ENCODE measurements at regions of chr11 and their contacts with region 1.

Region 1: DNA sequence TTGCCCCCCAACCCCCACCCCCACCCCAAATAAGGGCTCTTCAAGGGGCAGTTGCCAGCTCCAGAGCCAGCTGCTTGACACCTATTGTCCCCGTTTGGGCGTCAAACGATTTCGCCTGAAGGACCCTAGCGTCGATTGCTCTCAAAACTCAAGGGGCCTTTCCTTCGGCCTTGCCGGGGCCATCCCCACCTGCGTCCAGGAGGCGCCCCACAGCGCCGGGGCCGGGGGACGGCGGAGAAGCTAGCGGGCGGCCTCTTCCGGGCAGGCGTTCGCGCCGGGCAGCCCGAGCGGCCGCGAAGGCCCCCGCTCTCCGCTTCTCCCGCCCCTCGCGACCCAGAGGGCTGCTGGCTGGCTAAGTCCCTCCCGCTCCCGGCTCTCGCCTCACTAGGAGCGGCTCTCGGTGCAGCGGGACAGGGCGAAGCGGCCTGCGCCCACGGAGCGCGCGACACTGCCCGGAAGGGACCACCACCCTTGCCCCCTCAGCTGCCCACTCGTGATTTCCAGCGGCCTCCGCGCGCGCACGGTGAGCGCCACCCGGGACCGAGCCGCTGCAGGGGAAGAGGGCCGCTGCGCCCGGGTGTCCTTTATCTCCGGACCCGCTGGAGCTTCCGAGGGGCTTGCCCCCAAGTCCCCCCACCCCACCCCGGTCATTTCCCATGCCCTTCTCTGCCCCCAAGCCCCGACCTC is at the start of gene CAPRIN1:
- DNase-seq: peak; percentile 70 to 77 (median 74)
- H3K4me3 ChIP-seq: peak within 1 kb of the TSS; percentile 71 to 100 (median 79)
- H3K4me3 Mint-ChIP-seq: peak within 1 kb of the TSS; percentile 98 to 99
- H3K27ac ChIP-seq: peak within 1 kb of the TSS; percentile 91 to 99
- H3K27ac Mint-ChIP-seq: peak within 1 kb of the TSS; percentile 90 to 97 (median 95)
- H3K4me1 ChIP-seq: peaks cover 16 to 39% of the 10 kb centered on the region in 2 donors
- H3K4me1 Mint-ChIP-seq: peaks cover 35% of the 10 kb centered on the region
- H3K27me3 ChIP-seq: no peaks in the 10 kb centered on the region
- H3K27me3 Mint-ChIP-seq: peaks cover 0 to 1% (median 0%) of the 10 kb centered on the region in 3 donors
- CTCF ChIP-seq: no peak
- polyA plus RNA-seq, gene CAPRIN1: 50.4 to 81.5 (median 59.2) TPM

Region 2: GRCh38 chr11:33620423-33621171 is 430.9 kb before region 1 on chr11:
- intact Hi-C with region 1: no loop called
- DNase-seq: no peak
- H3K4me3 ChIP-seq: no peak overlapping the region
- H3K4me3 Mint-ChIP-seq: no peak overlapping the region
- H3K27ac ChIP-seq: no peak overlapping the region
- H3K27ac Mint-ChIP-seq: no peak overlapping the region
- H3K4me1 ChIP-seq: no peaks in the 10 kb centered on the region
- H3K4me1 Mint-ChIP-seq: no peaks in the 10 kb centered on the region
- H3K27me3 ChIP-seq: peaks cover 0 to 3% of the 10 kb centered on the region in 2 donors
- H3K27me3 Mint-ChIP-seq: peaks cover 1 to 4% (median 3%) of the 10 kb centered on the region in 3 donors
- CTCF ChIP-seq: no peak

Region 3: DNA sequence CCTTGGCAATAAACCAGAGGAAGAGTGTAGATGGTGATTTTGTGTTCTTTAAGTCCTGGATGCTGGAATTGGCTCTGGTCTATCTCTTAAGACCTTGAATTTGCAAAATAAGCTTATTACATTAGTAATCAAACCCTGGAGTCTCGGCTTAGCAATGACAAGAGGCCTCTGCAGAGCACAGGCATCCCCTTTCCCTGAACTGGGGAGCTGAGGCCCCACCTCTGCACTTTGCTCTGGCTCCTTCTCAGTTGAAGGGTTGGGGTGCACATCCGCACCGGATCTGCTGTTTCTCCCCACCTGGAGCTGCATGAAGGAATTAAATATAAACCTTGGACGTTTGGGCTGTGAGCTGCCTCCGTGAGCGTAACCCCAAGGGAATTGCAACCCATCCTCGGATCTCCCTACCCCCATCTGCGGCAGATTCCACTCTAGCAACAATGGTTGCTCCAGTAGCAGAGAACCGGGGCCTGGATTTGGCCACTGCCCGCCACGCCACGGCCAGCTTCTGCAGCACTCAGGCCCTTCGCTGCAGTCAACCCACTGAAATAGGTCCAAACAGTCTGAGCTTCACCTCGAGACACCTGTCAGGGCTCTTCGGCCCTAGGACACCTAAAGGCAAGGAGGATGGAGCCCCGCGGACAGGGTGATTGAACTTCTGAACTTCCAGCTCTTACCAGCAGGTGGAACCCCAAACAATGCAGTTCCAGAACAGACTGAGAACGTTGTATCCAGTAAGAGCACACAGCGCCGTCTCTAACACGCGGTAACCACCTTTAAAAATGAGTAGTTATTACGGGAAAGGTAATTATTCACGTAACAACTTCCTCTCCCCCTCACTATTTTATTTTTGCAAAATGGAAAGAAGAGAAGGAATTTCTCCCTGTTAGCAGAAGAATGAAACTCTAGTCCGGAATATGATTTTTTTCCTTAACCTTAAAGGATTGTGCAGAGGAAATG is 54.7 kb before region 1 on chr11:
- intact Hi-C with region 1: loop called in 1 of 2 experiments (anchors 5 kb)
- DNase-seq: peak; percentile 48 to 70 (median 68)
- H3K4me3 ChIP-seq: no peak overlapping the region
- H3K4me3 Mint-ChIP-seq: peak overlapping the region in 1 of 2 donors; percentile 52
- H3K27ac ChIP-seq: no peak overlapping the region
- H3K27ac Mint-ChIP-seq: no peak overlapping the region
- H3K4me1 ChIP-seq: no peaks in the 10 kb centered on the region
- H3K4me1 Mint-ChIP-seq: peaks cover 8% of the 10 kb centered on the region
- H3K27me3 ChIP-seq: peaks cover 0 to 14% of the 10 kb centered on the region in 2 donors
- H3K27me3 Mint-ChIP-seq: peaks cover 10 to 20% (median 19%) of the 10 kb centered on the region in 3 donors
- CTCF ChIP-seq: peak; percentile 90

Region 4: DNA sequence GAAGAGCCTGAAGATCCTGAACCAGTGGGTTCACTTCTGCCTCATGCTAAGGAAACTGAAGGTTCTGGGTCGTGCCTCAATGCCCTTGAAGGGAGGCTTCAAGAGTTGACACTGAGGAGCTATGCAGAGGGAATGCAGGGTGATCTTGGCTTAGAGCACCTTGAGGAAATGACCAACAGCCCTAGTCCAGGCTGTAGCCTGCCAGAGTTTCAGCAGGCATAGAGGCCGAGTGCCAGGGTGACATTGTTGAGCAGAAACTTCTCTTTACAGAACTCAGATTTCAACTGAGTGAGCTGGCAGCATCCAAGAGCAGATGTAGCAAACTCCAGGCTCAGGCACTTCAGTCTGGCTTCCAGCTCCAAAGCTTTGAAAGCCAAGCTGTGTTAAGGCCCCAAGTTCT is 23.1 kb before region 1 on chr11:
- intact Hi-C with region 1: no loop called
- DNase-seq: no peak
- H3K4me3 ChIP-seq: no peak overlapping the region
- H3K4me3 Mint-ChIP-seq: no peak overlapping the region
- H3K27ac ChIP-seq: no peak overlapping the region
- H3K27ac Mint-ChIP-seq: no peak overlapping the region
- H3K4me1 ChIP-seq: no peaks in the 10 kb centered on the region
- H3K4me1 Mint-ChIP-seq: no peaks in the 10 kb centered on the region
- H3K27me3 ChIP-seq: no peaks in the 10 kb centered on the region
- H3K27me3 Mint-ChIP-seq: peaks cover 0 to 8% (median 4%) of the 10 kb centered on the region in 3 donors
- CTCF ChIP-seq: no peak

Region 5: DNA sequence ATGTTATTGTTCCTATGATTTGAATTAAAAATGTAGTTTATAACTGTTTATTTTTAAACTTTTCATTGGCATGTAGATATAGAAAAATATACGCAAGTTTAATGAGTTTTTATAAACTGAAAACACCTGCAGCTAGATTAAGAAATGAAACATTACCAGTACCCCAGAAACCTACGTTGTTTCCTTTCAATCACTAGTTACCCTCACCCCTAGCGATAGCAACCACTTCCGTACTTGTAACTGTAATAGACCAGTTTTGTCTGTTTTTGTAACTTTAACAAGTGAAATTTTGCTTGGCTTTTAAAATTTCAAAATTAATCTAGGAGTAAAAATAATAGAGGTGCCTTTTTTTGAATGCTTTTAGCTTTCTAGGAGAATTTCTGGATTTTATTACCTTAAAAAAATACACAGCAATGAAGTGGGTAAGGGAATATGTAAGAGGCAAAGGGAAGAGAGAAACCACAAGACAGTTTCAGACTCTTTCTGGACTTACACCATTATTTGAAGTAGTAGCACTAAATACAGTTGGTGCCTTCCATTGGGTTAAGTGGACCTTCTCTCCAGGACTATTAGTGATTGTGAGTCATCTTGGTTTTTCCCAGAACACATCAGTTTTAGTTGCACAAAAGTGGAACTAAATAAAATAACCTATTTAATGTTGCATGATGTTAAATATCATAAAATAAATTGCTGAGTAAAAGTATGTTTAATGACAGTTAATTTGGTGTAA is 35.2 kb after region 1 on chr11:
- intact Hi-C with region 1: no loop called
- DNase-seq: peak in 1 of 3 donors; percentile 56
- H3K4me3 ChIP-seq: no peak overlapping the region
- H3K4me3 Mint-ChIP-seq: no peak overlapping the region
- H3K27ac ChIP-seq: peak overlapping the region in 1 of 2 donors; percentile 32
- H3K27ac Mint-ChIP-seq: peak overlapping the region in 1 of 7 donors; percentile 26
- H3K4me1 ChIP-seq: no peaks in the 10 kb centered on the region
- H3K4me1 Mint-ChIP-seq: no peaks in the 10 kb centered on the region
- H3K27me3 ChIP-seq: no peaks in the 10 kb centered on the region
- H3K27me3 Mint-ChIP-seq: peaks cover 0 to 3% (median 0%) of the 10 kb centered on the region in 3 donors
- CTCF ChIP-seq: no peak

Region 6: DNA sequence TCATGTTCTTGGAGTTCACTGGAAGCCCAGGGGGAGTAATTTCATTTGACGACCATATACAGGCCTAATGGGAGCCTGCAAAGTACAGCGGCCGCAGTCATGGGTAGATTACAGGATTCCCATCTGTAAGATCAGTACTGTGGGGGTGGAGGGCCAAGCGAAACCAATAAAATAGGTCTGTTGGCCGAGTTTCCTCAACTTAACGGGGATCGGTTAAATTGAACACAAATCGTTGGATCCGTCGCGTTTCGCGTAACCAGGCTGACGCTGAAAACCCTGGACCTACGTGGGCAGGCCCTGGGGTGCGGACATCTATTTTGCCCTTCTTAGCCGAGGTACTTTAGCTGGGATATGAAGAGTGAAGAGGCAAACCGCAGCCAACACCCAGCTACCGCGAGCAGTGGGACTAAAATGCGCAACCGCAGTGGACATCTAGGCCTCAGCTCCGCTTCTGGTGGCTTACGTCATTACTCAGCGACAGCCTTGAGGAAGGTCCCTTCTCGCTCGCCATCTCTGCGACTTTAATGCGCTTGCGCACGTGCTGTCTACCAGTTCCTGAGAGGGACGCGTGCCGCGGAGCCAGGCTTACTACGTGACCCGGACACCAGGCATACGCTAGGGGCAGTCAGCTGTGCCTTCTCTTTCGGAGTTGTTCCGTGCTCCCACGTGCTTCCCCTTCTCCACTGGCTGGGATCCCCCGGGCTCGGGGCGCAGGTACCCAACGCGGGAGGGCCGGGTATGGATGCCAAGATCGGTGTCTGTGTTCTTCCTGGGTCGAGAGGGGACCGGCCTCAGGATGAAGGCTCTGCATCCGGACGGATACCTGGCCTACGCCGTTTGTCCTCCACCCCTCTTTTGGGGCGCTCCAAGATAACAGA is 53.8 kb after region 1 on chr11 and contains the start of gene NAT10:
- intact Hi-C with region 1: loop called (anchors 2 kb)
- DNase-seq: peak; percentile 100
- H3K4me3 ChIP-seq: peak within 1 kb of the TSS; percentile 47 to 89 (median 82)
- H3K4me3 Mint-ChIP-seq: peak within 1 kb of the TSS; percentile 93 to 94
- H3K27ac ChIP-seq: peak within 1 kb of the TSS; percentile 86 to 98
- H3K27ac Mint-ChIP-seq: peak within 1 kb of the TSS; percentile 96 to 99 (median 98)
- H3K4me1 ChIP-seq: peaks cover 16 to 24% of the 10 kb centered on the region in 2 donors
- H3K4me1 Mint-ChIP-seq: peaks cover 25% of the 10 kb centered on the region
- H3K27me3 ChIP-seq: no peaks in the 10 kb centered on the region
- H3K27me3 Mint-ChIP-seq: no peaks in the 10 kb centered on the region
- CTCF ChIP-seq: peak; percentile 22
- polyA plus RNA-seq, gene NAT10: 10.1 to 13.3 (median 13.1) TPM

Measured in CD14-positive monocyte (primary cell).